Panc1 (cell line): ENCODE measurements at regions of chr16 and their contacts with region 1.

Region 1: GRCh38 chr16:72568502-72568901 is 396.5 kb upstream of the PMFBP1 start:
- DNase-seq: no peak
- ATAC-seq: no peak
- H3K4me3 ChIP-seq: no peak overlapping the region
- H3K27ac ChIP-seq: no peak overlapping the region
- H3K4me1 ChIP-seq: no peaks in the 10 kb centered on the region
- H3K27me3 ChIP-seq: no peaks in the 10 kb centered on the region
- CTCF ChIP-seq: no peak

Region 2: GRCh38 chr16:72664509-72665225 is 96.2 kb after region 1 on chr16:
- CTCF ChIA-PET with region 1: no interaction called
- POLR2A ChIA-PET with region 1: no interaction called
- in situ Hi-C with region 1: no loop called
- intact Hi-C with region 1: no loop called
- DNase-seq: peak; percentile 85
- ATAC-seq: peak; percentile 100
- H3K4me3 ChIP-seq: peak overlapping the region; percentile 82 to 93
- H3K27ac ChIP-seq: peak overlapping the region; percentile 88
- H3K4me1 ChIP-seq: peaks cover 14% of the 10 kb centered on the region; the same call in 1 of the 2 replicates
- H3K27me3 ChIP-seq: no peaks in the 10 kb centered on the region
- CTCF ChIP-seq: no peak

Region 3: DNA sequence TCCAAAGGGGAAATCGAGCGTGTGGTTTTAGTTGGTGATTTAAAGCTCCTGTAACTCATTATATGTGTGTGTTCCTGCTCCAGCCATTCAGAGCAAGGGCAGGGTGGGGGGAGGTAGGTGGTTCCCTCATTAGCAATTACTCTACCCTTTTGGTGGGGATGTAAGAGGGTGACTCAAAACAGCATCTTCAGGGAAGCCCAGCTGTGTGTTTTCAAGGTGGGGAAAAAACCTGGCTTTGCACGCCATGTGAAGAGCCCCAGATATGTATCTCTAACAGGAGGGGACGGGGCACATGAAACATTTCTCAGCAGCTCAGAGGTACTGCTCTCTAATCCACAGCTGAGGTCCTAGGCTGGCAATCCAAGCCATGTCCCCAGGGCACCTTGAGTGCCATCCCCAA is 720.7 kb after region 1 on chr16:
- CTCF ChIA-PET with region 1: no interaction called
- POLR2A ChIA-PET with region 1: no interaction called
- in situ Hi-C with region 1: no loop called
- intact Hi-C with region 1: no loop called
- DNase-seq: no peak
- ATAC-seq: no peak
- H3K4me3 ChIP-seq: no peak overlapping the region
- H3K27ac ChIP-seq: no peak overlapping the region
- H3K4me1 ChIP-seq: no peaks in the 10 kb centered on the region
- H3K27me3 ChIP-seq: no peaks in the 10 kb centered on the region
- CTCF ChIP-seq: no peak

Region 4: DNA sequence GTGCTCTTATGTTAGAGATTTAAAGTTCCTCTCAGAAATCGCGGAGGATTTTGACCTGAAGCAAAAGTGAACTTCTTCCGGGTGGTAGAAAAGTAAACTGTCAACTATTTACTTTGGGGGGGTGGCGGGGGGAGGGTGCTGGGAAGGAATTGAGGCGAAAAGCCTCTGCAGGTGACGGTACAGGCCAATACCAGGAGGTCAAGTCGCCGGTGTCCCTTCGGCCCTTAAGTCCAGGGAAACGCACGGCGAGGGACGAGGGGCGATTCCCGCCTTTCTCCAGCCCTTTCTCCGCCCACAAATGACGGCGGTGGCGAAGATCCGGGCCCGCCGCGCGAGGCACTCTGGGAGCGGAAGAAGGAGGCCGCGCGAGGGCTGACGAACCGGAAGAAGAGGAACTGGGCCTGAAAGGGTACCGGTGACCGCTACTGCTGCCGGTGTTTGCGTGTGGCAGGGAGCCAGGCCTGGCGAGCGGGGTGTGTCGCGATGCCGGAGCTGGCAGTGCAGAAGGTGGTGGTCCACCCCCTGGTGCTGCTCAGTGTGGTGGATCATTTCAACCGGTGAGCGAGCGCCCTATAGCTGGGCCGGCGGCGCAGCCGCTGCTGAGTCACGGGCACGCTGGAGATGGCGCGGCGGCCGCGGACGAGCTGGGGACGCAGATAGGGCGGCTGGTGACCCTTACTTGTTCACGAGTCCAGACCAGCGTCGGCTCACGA is 1728.1 kb after region 1 on chr16 and contains the start of gene PSMD7:
- CTCF ChIA-PET with region 1: no interaction called
- POLR2A ChIA-PET with region 1: interaction called, 11 read pairs
- in situ Hi-C with region 1: no loop called
- intact Hi-C with region 1: no loop called
- DNase-seq: peak; percentile 47
- ATAC-seq: peak; percentile 99
- H3K4me3 ChIP-seq: peak within 1 kb of the TSS; percentile 67 to 93
- H3K27ac ChIP-seq: peak within 1 kb of the TSS; percentile 98
- H3K4me1 ChIP-seq: peaks cover 11% of the 10 kb centered on the region; the same call in 1 of the 2 replicates
- H3K27me3 ChIP-seq: no peaks in the 10 kb centered on the region
- CTCF ChIP-seq: no peak
- total RNA-seq, gene PSMD7: 83.9 TPM